AG04449 (cell line): ENCODE measurements at regions of chr4 and their contacts with region 1.

Region 1: GRCh38 chr4:139603576-139604387 is 47.8 kb upstream of the SETD7 start:
- DNase-seq: no peak
- H3K4me3 ChIP-seq: no peak overlapping the region
- CTCF ChIP-seq: peak; percentile 38

Region 2: GRCh38 chr4:139530833-139531427 is 72.9 kb before region 1 on chr4:
- CTCF ChIA-PET with region 1: no interaction called
- POLR2A ChIA-PET with region 1: no interaction called
- DNase-seq: no peak
- H3K4me3 ChIP-seq: no peak overlapping the region
- CTCF ChIP-seq: peak; percentile 54

Region 3: GRCh38 chr4:139582044-139582443 is 21.7 kb before region 1 on chr4:
- CTCF ChIA-PET with region 1: interaction called, 42 read pairs
- POLR2A ChIA-PET with region 1: no interaction called
- DNase-seq: no peak
- H3K4me3 ChIP-seq: no peak overlapping the region
- CTCF ChIP-seq: peak; percentile 3

Region 4: GRCh38 chr4:139619644-139620043 is 15.9 kb after region 1 on chr4:
- CTCF ChIA-PET with region 1: interaction called, 58 read pairs
- POLR2A ChIA-PET with region 1: no interaction called
- DNase-seq: no peak
- H3K4me3 ChIP-seq: no peak overlapping the region
- CTCF ChIP-seq: peak; percentile 55

Region 5: GRCh38 chr4:139633661-139634060 is 29.9 kb after region 1 on chr4:
- CTCF ChIA-PET with region 1: interaction called, 66 read pairs
- POLR2A ChIA-PET with region 1: no interaction called
- DNase-seq: no peak
- H3K4me3 ChIP-seq: no peak overlapping the region
- CTCF ChIP-seq: peak; percentile 41

Region 6: GRCh38 chr4:139651282-139652194 is 47.8 kb after region 1 on chr4:
- CTCF ChIA-PET with region 1: interaction called, 554 read pairs
- POLR2A ChIA-PET with region 1: no interaction called
- DNase-seq: no peak
- H3K4me3 ChIP-seq: no peak overlapping the region
- CTCF ChIP-seq: peak; percentile 90